ENCODE measurements at regions of chr15 and their contacts with region 1.

Region 1: DNA sequence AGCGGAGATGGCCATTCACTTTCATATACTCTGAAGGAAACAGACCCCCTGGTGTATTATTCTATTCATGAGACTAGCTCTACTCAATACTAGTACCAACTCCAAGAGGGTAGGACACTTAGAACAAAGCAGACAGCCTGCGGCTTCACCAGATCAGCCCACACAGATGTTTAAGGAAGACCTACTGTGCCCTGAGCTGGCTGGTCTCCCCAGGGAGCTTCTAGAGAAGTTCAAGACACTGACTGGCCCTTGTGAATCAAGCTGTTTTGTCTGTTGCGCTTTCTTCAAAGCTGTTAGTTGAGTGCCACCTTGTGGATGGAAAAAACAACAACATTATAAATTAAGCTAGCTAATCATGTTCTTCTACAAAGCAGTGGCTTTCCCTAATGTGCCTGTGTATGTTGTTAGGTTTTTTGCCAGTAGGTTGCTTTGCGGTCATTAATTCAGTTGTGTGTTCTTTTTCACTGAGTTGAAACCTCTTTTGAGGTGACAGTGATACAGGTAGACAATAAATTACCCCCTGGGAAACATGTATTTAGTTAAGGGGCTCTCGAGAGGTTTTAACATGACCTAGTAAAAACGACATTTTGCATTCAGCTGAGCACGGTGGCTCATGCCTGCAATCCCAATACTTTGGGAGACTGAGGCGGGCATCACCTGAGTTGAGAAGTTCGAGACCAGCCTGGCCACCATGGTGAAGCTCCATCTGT is 64.2 kb upstream of the MYZAP start:
- DNase-seq: no peak
- ATAC-seq: peak; percentile 81
- H3K4me3 ChIP-seq: no peak overlapping the region
- H3K27ac ChIP-seq: no peak overlapping the region
- H3K4me1 ChIP-seq: no peaks in the 10 kb centered on the region
- H3K27me3 ChIP-seq: no peaks in the 10 kb centered on the region
- CTCF ChIP-seq: peak; percentile 60

Region 2: DNA sequence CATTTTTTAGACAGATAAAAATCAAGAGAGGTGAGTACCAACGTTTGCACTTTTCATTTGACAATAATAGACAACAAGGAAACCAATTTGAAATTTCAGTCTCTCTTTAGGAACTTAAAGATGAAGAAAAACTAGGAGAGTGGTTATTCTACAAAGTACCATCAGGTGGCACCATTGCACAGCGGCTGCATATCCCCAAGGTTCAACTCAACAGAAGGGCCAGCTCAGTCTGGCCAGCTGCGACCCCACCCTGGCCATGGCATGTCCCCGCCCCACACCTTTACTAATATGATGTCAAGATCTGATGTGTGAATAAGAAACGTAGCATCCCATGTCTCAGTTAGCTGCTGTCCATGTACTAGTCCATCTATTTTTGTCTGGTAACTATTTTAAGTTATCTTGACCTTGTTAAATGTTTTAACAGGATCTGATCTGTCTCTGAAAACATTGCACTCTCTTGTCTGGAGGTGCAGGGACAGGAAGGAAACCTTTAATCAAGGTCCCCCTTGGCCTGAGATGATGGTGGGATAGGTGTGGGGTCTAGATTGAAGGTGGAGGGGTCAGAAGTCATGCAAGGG is 186.8 kb before region 1 on chr15:
- intact Hi-C with region 1: loop called (anchors 5 kb)
- DNase-seq: peak; percentile 66
- ATAC-seq: peak; percentile 88
- H3K4me3 ChIP-seq: no peak overlapping the region
- H3K27ac ChIP-seq: no peak overlapping the region
- H3K4me1 ChIP-seq: no peaks in the 10 kb centered on the region
- H3K27me3 ChIP-seq: no peaks in the 10 kb centered on the region
- CTCF ChIP-seq: peak; percentile 88

Measured in upper lobe of right lung (tissue), 1 donor.